A673 (cell line): ENCODE measurements at regions of chr3 and their contacts with region 1.

Region 1: DNA sequence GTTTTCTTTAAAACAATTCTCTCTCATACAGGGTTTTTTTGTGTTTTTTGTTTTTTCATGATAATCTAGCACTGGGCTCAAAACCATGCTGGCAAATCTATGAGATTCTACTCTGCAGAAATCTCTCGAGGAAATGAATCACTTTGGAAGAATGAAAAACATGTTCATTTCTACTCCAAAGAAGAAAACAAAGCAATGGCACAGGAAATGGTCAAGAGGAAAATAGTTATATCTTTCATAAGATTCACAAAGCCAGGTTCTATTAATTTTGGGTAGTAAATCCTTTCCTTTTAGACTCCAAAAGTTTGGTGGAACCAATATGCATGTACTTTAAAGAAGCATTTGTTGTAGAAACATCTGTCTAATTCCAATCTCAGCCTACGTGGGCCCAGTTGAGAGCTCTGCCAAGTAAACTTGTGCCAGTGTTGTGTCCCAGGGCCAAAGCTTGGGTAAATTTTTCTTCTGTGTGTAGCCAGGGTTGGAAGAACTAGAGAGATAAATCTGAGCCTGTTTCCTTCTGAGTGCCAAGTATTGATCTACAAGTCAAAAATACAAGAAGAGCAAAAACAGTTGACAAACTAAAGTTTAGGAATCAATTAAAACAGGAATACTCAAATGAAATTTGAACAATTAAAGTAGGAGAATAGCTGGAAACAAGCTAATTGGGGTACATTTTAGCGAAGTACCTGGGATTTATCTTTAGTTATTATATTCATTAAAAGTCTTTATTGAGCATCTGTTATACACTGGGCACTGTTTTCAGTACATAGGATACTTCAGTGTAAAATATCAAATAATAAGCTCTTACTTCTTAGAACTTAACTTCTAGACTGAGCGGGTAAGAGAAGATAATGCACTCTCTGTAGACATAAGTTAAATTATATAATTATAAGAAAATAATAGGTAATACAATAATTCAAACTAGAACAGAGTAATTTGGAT is 657.5 kb upstream of the NECTIN3 start:
- DNase-seq: peak; percentile 93
- H3K4me3 ChIP-seq: no peak overlapping the region
- H3K27ac ChIP-seq: peak overlapping the region; percentile 87
- H3K4me1 ChIP-seq: peaks cover 35% of the 10 kb centered on the region
- H3K27me3 ChIP-seq: no peaks in the 10 kb centered on the region
- CTCF ChIP-seq: no peak

Region 2: DNA sequence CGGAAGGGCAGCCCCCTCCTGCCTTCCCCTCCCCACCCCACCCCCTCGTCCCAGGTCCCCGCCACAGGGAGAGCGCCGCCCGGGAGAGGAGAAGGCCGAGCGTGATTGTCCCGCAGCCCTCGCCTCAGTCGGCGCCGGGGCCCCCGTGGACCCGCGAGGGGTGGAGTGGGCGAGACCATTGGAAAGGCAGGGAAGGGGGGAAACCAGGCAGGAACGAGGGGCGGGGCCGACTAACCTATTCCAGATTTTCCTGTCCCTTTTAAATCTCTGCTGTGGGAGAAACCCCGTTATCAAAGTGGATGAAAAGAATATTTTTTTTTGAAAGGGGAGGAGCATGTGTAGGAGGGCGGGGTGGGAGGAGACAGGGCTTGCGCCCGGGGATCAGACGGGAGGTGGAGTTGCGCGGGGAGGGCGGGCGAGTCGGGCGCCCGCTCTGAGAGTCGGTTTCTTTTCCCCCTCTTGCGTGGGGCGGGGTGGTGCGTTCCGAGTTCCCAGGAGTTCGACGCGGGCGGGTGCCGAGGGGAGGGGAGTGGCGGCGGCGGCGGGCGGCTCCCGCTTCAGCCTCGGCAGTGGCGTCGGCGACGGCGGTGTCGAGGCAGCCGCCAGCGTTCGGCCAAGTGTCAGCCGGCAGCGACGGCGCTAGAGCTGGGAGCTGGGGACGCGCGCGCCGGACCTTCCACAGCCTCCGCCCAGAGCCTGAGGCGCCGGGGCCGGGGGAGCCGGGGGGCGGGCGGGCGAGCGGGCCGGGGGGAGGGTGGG is 657.4 kb after region 1 on chr3 and contains the start of gene NECTIN3:
- CTCF ChIA-PET with region 1: no interaction called
- POLR2A ChIA-PET with region 1: no interaction called
- intact Hi-C with region 1: loop called (anchors 10 kb)
- DNase-seq: peak; percentile 95
- H3K4me3 ChIP-seq: peak within 1 kb of the TSS; percentile 59
- H3K27ac ChIP-seq: peak within 1 kb of the TSS; percentile 78
- H3K4me1 ChIP-seq: peaks cover 7% of the 10 kb centered on the region
- H3K27me3 ChIP-seq: peaks cover 13% of the 10 kb centered on the region
- CTCF ChIP-seq: no peak
- total RNA-seq, gene NECTIN3: 9.4 and 11.7 TPM in 2 replicates